ENCODE measurements at regions of chr7 and their contacts with region 1.

Region 1: DNA sequence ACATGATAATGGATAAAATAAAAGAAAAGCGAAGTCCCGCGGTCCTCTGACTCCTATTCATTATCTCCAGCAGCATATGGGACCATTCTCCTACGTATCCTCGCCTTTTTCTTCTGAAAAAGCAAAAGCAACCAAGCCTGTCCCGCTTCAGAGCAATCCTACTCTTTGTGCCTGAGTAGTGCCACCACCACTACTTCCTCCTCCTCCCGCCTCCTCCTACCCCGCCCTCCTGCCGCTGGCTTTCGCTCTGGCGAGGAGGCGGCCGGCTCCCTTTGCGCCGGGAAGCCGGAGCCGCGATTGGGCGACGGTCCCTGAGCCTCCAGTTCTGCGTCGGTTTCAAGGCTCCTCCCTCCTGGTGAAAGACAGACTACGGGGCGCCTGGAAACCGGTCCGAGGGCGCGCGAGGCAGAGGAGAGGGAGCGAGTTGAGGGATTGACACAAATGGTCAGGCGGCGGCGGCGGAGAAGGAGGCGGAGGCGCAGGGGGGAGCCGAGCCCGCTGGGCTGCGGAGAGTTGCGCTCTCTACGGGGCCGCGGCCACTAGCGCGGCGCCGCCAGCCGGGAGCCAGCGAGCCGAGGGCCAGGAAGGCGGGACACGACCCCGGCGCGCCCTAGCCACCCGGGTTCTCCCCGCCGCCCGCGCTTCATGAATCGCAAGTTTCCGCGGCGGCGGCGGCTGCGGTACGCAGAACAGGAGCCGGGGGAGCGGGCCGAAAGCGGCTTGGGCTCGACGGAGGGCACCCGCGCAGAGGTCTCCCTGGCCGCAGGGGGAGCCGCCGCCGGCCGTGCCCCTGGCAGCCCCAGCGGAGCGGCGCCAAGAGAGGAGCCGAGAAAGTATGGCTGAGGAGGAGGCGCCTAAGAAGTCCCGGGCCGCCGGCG is at the start of gene FZD1:
- DNase-seq: peak; percentile 97
- total RNA-seq, gene FZD1: 23.1 TPM

Region 2: DNA sequence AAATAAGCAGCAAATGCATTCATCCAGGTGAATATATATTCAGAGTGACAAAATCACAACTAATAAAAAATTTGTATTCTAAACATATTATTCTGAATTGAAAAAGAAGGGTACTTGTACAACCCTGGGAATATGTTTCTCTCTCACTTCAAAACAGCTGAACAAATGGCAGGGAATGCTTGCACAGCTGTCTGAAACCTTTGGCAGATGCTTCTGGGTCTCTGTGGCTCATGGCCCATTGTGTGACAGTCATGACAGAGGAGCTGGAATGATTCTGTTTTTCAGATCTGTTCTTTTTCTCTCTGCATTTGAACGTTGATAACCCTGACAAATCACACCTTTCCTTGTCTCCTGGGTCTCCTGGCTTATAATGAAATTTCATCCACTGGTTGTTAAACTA is 275.8 kb before region 1 on chr7:
- intact Hi-C with region 1: no loop called
- DNase-seq: no peak

Region 3: GRCh38 chr7:91082852-91083495 is 181.3 kb before region 1 on chr7:
- intact Hi-C with region 1: loop called (anchors 2 kb)
- DNase-seq: no peak

Region 4: GRCh38 chr7:91496251-91496820 is 232.1 kb after region 1 on chr7:
- intact Hi-C with region 1: no loop called
- DNase-seq: no peak

Region 5: GRCh38 chr7:91636129-91636724 is 371.9 kb after region 1 on chr7:
- intact Hi-C with region 1: loop called (anchors 10 kb)
- DNase-seq: no peak

Region 6: GRCh38 chr7:91771921-91772815 is 507.9 kb after region 1 on chr7:
- intact Hi-C with region 1: loop called (anchors 5 kb)
- DNase-seq: no peak

Region 7: GRCh38 chr7:91880413-91881241 is 616.3 kb after region 1 on chr7 and contains the start of gene MTERF1:
- intact Hi-C with region 1: loop called (anchors 10 kb)
- DNase-seq: peak; percentile 95
- total RNA-seq, gene MTERF1: 7.5 TPM

Measured in cardiac septum (tissue), 1 donor.